Psoas muscle (tissue), 8 donors: ENCODE measurements at regions of chr6 and their contacts with region 1.

Region 1: DNA sequence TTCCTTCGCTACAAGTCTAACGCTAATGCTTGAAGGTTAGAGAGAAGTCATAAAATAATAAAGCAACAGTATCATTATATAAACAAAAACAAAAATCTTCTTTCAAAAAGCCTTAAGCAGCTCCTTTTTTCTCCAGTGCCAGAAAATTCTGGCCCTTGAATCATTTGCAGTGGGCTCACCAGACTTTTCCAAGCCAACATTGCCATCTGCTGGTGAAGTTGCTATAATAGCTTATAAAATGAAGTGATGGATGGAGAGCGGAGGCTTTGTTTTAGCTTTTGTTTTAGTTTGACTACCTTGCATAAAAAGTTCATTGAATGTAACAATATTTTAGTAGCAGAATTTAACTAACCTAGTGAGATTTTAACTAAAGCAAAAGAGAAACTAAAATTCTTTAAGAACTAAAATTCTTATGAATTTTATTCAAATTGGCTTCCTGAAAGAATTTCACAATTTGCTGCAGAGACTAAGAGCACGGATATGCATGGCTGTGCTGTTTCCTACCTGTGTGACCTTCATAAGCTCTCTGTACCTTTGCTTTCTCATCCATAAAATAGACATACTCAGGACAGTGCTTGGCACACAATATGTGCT is 44.8 kb upstream of the SLC2A12 start:
- DNase-seq: peak; percentile 20 to 58
- ATAC-seq: peak in 3 of 4 donors; percentile 62 to 80 (median 66)
- H3K4me3 ChIP-seq: no peak overlapping the region
- H3K27ac ChIP-seq: no peak overlapping the region
- H3K4me1 ChIP-seq: no peaks in the 10 kb centered on the region
- H3K27me3 ChIP-seq: no peaks in the 10 kb centered on the region
- CTCF ChIP-seq: peak; percentile 74

Region 2: DNA sequence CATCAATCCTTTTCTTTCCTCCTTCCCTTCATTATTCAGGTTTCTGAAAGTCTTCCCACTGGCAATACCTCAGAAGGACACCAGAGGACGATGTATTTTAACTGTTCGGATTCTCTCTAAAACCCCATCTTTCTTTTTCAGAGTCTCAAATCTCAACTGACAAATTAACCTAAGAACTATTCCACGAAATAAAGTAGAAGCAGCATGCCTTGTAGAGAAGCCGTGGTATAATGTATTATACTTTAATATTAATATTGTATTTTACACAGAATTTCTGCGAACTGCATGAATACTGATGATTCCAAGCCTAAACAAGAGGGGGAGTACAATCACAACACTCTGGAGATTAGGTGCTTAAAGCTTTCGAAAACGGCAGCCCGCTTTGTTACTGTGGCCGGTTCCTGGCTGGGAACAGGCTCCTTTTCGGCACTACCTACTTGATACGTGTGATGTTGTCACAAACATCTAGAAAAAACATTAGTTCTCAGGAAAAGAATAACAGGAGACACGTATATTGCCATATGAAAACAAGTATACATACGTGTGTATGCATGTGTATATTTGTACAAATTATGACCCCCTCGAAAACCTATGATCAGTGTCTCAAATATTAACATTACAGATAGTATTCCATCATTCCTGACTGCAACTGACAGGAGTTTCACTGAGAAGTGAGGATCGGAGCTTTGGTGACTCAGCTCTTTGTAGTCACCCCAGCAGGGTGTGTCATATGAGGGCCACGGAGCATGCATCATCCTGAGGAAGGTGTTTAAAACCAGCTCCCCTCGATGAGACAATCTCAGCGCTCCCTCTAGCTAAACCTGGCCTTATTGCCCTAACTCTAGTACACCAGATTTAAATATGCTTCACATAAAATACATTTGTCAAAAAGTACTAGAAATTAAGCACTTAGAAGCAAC is 528.0 kb before region 1 on chr6:
- intact Hi-C with region 1: loop called (anchors 5 to 10 kb)
- DNase-seq: peak; percentile 16 to 52
- ATAC-seq: peak; percentile 89 to 97 (median 96)
- H3K4me3 ChIP-seq: peak overlapping the region; percentile 69
- H3K27ac ChIP-seq: peak overlapping the region; percentile 63
- H3K4me1 ChIP-seq: no peaks in the 10 kb centered on the region
- H3K27me3 ChIP-seq: no peaks in the 10 kb centered on the region
- CTCF ChIP-seq: peak; percentile 95

Region 3: GRCh38 chr6:133923938-133924593 is 173.1 kb before region 1 on chr6:
- intact Hi-C with region 1: loop called (anchors 1 to 2 kb)
- DNase-seq: peak in 1 of 2 donors; percentile 29
- ATAC-seq: peak; percentile 80 to 96 (median 94)
- H3K4me3 ChIP-seq: no peak overlapping the region
- H3K27ac ChIP-seq: no peak overlapping the region
- H3K4me1 ChIP-seq: no peaks in the 10 kb centered on the region
- H3K27me3 ChIP-seq: peaks cover 0 to 3% (median 0%) of the 10 kb centered on the region in 3 donors
- CTCF ChIP-seq: peak; percentile 85

Region 4: GRCh38 chr6:133973109-133973971 is 123.9 kb before region 1 on chr6:
- intact Hi-C with region 1: loop called in 1 of 2 experiments (anchors 2 kb)
- DNase-seq: no peak
- ATAC-seq: peak in 1 of 4 donors; percentile 75
- H3K4me3 ChIP-seq: no peak overlapping the region
- H3K27ac ChIP-seq: no peak overlapping the region
- H3K4me1 ChIP-seq: peaks cover 31% of the 10 kb centered on the region
- H3K27me3 ChIP-seq: no peaks in the 10 kb centered on the region
- CTCF ChIP-seq: peak; percentile 79